Activated T-helper 1 cell treated with anti-CD3 and anti-CD28 coated beads, Interleukin-12 subunit alpha, Interleukin-12 subunit beta, Interleukin-2, Interleukin-4 antibody, amounts not matched to agents 30 ng/mL and 10 ng/mL and 1 ng/mL, durations not matched to agents 14 hours and 24 hours and 36 hours (primary cell): ENCODE measurements at regions of chr2 and their contacts with region 1.

Region 1: GRCh38 chr2:207238831-207239701 is 73.3 kb upstream of the KLF7 start:
- DNase-seq: no peak
- H3K4me3 Mint-ChIP-seq: peak overlapping the region; percentile 50
- H3K27ac Mint-ChIP-seq: peak overlapping the region; percentile 73
- H3K4me1 Mint-ChIP-seq: peaks cover 19% of the 10 kb centered on the region
- H3K27me3 Mint-ChIP-seq: no peaks in the 10 kb centered on the region

Region 2: GRCh38 chr2:207173660-207174059 is 65.4 kb before region 1 on chr2:
- intact Hi-C with region 1: no loop called
- DNase-seq: no peak
- H3K4me3 Mint-ChIP-seq: no peak overlapping the region
- H3K27ac Mint-ChIP-seq: no peak overlapping the region
- H3K4me1 Mint-ChIP-seq: peaks cover 6% of the 10 kb centered on the region
- H3K27me3 Mint-ChIP-seq: peaks cover 2% of the 10 kb centered on the region

Region 3: GRCh38 chr2:207223051-207223450 is 16.0 kb before region 1 on chr2:
- intact Hi-C with region 1: loop called (anchors 1 kb)
- DNase-seq: no peak
- H3K4me3 Mint-ChIP-seq: peak overlapping the region; percentile 60
- H3K27ac Mint-ChIP-seq: peak overlapping the region; percentile 84
- H3K4me1 Mint-ChIP-seq: peaks cover 46% of the 10 kb centered on the region
- H3K27me3 Mint-ChIP-seq: peaks cover 6% of the 10 kb centered on the region

Region 4: DNA sequence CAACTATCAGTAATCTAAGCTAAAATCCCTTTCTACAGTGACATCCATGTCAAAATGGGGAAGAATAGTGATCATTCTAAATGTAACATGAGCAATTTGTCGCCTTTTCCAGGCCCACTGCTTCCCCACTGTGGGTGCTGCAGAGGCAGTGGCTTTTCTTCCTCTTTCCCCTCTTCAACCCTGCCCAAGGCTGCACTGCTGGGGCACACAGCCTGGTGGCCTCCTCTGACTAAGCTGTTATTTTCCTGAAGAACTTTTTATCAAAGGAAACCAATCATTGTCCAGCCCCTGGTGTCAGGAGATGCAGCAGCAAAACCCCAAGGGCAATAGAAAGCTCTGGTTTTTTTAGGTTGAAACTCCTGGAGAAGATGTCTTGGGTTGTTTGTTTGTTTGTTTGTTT is 44.3 kb after region 1 on chr2:
- intact Hi-C with region 1: loop called (anchors 1 kb)
- DNase-seq: no peak
- H3K4me3 Mint-ChIP-seq: peak overlapping the region; percentile 53
- H3K27ac Mint-ChIP-seq: peak overlapping the region; percentile 85
- H3K4me1 Mint-ChIP-seq: peaks cover 76% of the 10 kb centered on the region
- H3K27me3 Mint-ChIP-seq: no peaks in the 10 kb centered on the region

Region 5: GRCh38 chr2:207317378-207317984 is 78.4 kb after region 1 on chr2:
- intact Hi-C with region 1: loop called (anchors 1 kb)
- DNase-seq: no peak
- H3K4me3 Mint-ChIP-seq: no peak overlapping the region
- H3K27ac Mint-ChIP-seq: peak overlapping the region; percentile 33
- H3K4me1 Mint-ChIP-seq: peaks cover 50% of the 10 kb centered on the region
- H3K27me3 Mint-ChIP-seq: no peaks in the 10 kb centered on the region